ENCODE measurements at regions of chr18 and their contacts with region 1.

Region 1: GRCh38 chr18:62522504-62523254 is at the start of gene ZCCHC2:
- DNase-seq: peak; percentile 99
- ATAC-seq: peak; percentile 82
- H3K4me3 Mint-ChIP-seq: peak within 1 kb of the TSS; percentile 95
- H3K27ac Mint-ChIP-seq: peak within 1 kb of the TSS; percentile 94
- H3K4me1 Mint-ChIP-seq: peaks cover 19% of the 10 kb centered on the region
- H3K27me3 Mint-ChIP-seq: no peaks in the 10 kb centered on the region
- total RNA-seq, gene ZCCHC2: 26.1 to 40.1 TPM

Region 2: DNA sequence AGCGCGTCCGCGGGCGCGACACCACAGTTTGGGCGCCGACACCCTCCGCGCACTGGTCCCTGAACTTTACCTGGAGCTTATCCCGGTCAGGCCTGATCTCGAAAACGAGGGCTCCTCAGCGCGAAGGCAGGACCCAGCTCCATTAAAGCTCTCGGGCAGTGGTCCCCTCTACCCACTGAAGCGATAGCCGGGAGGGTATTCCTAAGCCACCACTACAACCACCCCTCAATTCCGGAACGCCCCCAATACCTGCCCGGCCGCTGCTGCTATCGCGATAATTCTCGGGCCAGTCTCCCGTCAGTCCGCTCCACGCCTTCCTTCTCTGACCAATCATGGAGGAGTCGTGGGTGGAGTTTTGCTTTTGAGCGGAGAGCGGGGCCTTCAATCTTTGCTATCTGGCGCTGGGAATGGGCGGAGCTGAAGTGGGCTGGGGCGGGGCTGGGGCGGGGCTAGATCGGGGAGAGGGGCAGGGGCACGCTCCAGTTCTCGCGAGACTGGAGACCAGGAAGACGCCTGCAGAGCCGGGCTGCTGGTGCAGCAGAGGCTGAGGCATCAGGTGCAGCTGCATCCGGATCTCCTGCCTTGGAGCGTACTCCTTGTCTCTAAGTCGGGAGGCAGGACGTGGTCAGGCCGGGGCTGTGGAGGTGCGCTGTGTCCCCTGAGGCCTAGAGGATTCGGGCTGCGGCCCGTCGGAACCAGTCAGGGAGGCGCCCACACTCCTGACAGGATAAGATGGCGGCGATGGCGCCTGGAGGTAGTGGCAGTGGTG is 335.7 kb before region 1 on chr18 and contains the starts of genes PIGN and RELCH:
- CTCF ChIA-PET with region 1: interaction called, 3 read pairs
- POLR2A ChIA-PET with region 1: interaction called, 3 read pairs
- intact Hi-C with region 1: loop called (anchors 1 kb)
- DNase-seq: peak; percentile 97
- ATAC-seq: peak; percentile 94
- H3K4me3 Mint-ChIP-seq: peak within 1 kb of the TSS; percentile 98
- H3K27ac Mint-ChIP-seq: peak within 1 kb of the TSS; percentile 96
- H3K4me1 Mint-ChIP-seq: peaks cover 43% of the 10 kb centered on the region
- H3K27me3 Mint-ChIP-seq: no peaks in the 10 kb centered on the region
- total RNA-seq, gene PIGN: 29.0 to 29.4 TPM
- total RNA-seq, gene RELCH: 20.5 to 20.7 TPM

Region 3: GRCh38 chr18:62384610-62385099 is 138.0 kb before region 1 on chr18:
- CTCF ChIA-PET with region 1: no interaction called
- POLR2A ChIA-PET with region 1: no interaction called
- intact Hi-C with region 1: no loop called
- DNase-seq: no peak
- ATAC-seq: no peak
- H3K4me3 Mint-ChIP-seq: no peak overlapping the region
- H3K27ac Mint-ChIP-seq: no peak overlapping the region
- H3K4me1 Mint-ChIP-seq: no peaks in the 10 kb centered on the region
- H3K27me3 Mint-ChIP-seq: no peaks in the 10 kb centered on the region

Region 4: GRCh38 chr18:62445386-62445917 is 77.2 kb before region 1 on chr18:
- CTCF ChIA-PET with region 1: no interaction called
- POLR2A ChIA-PET with region 1: no interaction called
- intact Hi-C with region 1: loop called in 1 of 2 experiments (anchors 5 kb)
- DNase-seq: peak; percentile 30
- ATAC-seq: peak; percentile 91
- H3K4me3 Mint-ChIP-seq: no peak overlapping the region
- H3K27ac Mint-ChIP-seq: no peak overlapping the region
- H3K4me1 Mint-ChIP-seq: peaks cover 5% of the 10 kb centered on the region
- H3K27me3 Mint-ChIP-seq: peaks cover 2% of the 10 kb centered on the region

Region 5: DNA sequence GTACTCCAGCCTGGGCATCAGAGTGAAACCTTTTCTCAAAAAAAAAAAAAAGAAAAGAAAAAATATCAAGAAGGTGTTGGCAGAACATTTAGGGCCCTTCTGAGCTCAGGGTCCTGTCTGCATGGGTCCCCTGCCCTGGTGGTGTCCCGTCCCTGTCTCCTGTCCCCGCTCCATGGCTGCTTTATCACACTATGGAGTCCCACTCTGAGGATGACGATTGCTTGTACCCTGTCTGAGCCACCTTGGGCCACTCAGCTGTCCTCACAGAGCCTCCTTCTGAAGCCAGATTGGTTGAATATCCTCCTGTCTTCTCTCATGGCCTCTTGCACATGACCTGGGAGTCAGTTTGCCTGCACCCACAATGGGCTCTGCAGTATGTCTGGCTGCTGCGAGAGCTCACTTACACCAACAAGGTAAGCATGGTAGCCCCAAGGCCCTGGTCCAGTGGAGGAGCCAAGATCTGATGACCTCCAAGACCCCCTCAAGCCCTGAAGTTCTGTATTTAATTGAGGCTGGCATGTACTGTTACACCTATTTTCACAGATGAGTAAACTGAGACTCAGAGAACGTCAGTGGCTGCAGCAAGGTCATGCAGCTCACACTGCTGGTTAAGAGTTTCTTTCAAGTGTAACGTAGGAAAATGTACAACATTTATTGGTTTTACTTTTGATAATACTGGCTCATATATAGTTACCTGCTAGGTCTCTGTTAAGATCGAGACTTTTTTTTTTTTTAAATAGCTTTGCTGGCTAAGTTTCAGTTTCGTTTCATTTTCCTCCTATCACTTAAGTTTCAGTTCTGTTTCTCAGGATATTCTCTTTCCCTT is 16.8 kb before region 1 on chr18:
- CTCF ChIA-PET with region 1: interaction called, 12 read pairs
- POLR2A ChIA-PET with region 1: interaction called, 4 read pairs
- intact Hi-C with region 1: loop called (anchors 1 kb)
- DNase-seq: peak; percentile 66
- ATAC-seq: peak; percentile 99
- H3K4me3 Mint-ChIP-seq: peak overlapping the region; percentile 60
- H3K27ac Mint-ChIP-seq: peak overlapping the region; percentile 98
- H3K4me1 Mint-ChIP-seq: peaks cover 26% of the 10 kb centered on the region
- H3K27me3 Mint-ChIP-seq: no peaks in the 10 kb centered on the region

Region 6: DNA sequence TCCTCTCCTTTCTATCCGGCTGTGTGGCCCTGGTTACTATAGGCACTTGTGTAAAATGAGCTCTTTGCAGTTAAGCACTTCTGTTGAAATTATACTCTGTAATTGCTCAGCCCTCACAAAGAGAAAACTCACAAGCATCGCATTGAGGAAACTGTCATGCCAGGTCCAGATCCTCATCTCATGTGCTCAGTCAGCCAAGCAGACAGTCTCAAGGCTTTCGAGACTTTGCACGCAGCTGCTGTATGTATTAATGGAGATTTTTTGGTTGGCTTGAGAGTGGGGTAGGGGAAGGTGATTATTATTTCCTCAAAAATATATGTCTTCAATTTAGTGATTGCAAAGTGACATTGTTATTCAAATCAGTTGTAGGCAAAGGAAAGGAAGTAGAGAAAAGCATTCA is 159.7 kb after region 1 on chr18:
- CTCF ChIA-PET with region 1: no interaction called
- POLR2A ChIA-PET with region 1: no interaction called
- intact Hi-C with region 1: no loop called
- DNase-seq: no peak
- ATAC-seq: no peak
- H3K4me3 Mint-ChIP-seq: no peak overlapping the region
- H3K27ac Mint-ChIP-seq: no peak overlapping the region
- H3K4me1 Mint-ChIP-seq: no peaks in the 10 kb centered on the region
- H3K27me3 Mint-ChIP-seq: peaks cover 2% of the 10 kb centered on the region

Region 7: DNA sequence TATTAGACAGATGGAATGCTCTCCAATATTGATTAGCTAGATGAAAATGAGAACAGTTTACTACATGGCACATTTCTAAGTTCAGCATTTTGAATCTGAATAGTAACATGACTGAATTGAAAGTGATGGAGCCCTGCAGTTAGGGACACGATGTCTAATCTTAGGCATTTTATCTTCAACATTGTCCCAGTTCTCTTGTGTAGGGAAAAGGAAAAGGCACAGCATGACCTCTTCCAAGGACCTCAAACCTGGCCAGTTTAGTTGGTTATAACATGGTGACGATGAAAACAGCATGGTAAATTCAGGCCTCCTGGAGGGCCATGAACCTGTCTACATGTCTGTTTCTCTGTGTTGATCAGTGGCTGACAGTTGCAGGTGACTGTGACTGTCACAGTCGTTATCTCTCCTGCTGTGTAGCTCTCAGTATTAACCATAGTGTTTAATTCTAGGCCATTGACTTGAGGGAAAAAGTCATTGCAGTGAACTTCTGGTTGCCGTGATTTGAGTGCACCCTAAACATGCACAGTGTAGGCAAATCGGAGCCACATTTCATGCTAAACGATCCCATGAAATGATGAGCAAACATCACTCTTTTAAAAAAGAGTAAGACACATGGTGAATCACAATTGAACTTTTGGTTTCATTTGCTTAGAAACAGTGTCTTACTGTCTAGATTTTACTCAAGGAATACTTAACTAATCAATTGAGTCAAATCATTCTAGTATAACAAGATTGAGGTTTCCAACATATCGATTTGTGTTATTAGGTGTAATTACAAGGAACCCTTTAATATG is 322.4 kb after region 1 on chr18:
- CTCF ChIA-PET with region 1: no interaction called
- POLR2A ChIA-PET with region 1: no interaction called
- intact Hi-C with region 1: loop called in 1 of 2 experiments (anchors 10 kb)
- DNase-seq: peak; percentile 63
- ATAC-seq: peak; percentile 90
- H3K4me3 Mint-ChIP-seq: peak overlapping the region; percentile 15
- H3K27ac Mint-ChIP-seq: peak overlapping the region; percentile 91
- H3K4me1 Mint-ChIP-seq: peaks cover 40% of the 10 kb centered on the region
- H3K27me3 Mint-ChIP-seq: no peaks in the 10 kb centered on the region

Region 8: DNA sequence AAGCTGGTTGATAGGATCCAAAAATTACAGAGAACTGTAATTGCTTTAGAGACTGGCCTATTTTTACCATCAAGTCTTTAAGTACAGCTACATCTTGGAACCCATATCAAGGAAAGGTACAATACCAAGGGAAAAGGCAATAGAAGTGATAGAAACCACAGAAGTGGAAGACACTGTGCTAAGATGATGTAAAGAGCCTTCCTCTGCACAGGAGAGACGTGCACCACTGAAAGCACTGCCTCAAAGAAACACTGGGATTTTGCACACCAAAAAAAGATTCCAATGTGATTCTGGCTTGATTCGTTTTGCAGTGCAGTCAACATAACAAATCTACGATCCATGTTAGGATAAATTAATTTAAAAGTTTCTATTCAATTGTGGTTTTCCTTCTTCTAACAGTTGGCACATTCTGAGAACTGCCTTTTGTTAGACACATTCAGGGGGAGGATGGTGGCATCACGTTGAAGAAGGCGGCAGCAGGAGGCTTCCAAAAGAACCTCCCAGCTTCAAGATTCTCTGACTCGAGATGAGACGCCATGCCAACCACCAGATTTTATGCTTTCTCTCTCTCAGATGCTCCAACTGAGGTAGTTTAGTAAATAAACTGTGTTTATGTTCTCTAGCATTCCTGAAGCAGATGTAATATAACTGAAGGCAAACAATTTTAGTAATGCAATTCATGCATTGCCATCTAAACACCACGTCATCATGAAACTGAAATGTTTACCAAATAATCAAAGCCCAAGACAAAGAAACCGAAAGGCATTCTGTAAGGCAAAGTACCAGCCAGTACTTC is 694.0 kb after region 1 on chr18:
- CTCF ChIA-PET with region 1: no interaction called
- POLR2A ChIA-PET with region 1: no interaction called
- intact Hi-C with region 1: loop called in 1 of 2 experiments (anchors 5 kb)
- DNase-seq: peak; percentile 56
- ATAC-seq: peak; percentile 28
- H3K4me3 Mint-ChIP-seq: peak overlapping the region; percentile 34
- H3K27ac Mint-ChIP-seq: peak overlapping the region; percentile 91
- H3K4me1 Mint-ChIP-seq: peaks cover 95% of the 10 kb centered on the region
- H3K27me3 Mint-ChIP-seq: no peaks in the 10 kb centered on the region

Region 9: GRCh38 chr18:63422087-63422809 is 899.6 kb after region 1 on chr18 and contains the start of gene VPS4B:
- CTCF ChIA-PET with region 1: no interaction called
- POLR2A ChIA-PET with region 1: no interaction called
- intact Hi-C with region 1: loop called (anchors 1 to 5 kb)
- DNase-seq: peak; percentile 100
- ATAC-seq: peak; percentile 95
- H3K4me3 Mint-ChIP-seq: peak within 1 kb of the TSS; percentile 99
- H3K27ac Mint-ChIP-seq: peak within 1 kb of the TSS; percentile 95
- H3K4me1 Mint-ChIP-seq: peaks cover 30% of the 10 kb centered on the region
- H3K27me3 Mint-ChIP-seq: no peaks in the 10 kb centered on the region
- total RNA-seq, gene VPS4B: 40.7 to 48.4 TPM

Region 10: GRCh38 chr18:63753676-63754075 is 1231.0 kb after region 1 on chr18:
- CTCF ChIA-PET with region 1: no interaction called
- POLR2A ChIA-PET with region 1: no interaction called
- intact Hi-C with region 1: no loop called
- DNase-seq: no peak
- ATAC-seq: no peak
- H3K4me3 Mint-ChIP-seq: no peak overlapping the region
- H3K27ac Mint-ChIP-seq: no peak overlapping the region
- H3K4me1 Mint-ChIP-seq: no peaks in the 10 kb centered on the region
- H3K27me3 Mint-ChIP-seq: no peaks in the 10 kb centered on the region

Region 11: DNA sequence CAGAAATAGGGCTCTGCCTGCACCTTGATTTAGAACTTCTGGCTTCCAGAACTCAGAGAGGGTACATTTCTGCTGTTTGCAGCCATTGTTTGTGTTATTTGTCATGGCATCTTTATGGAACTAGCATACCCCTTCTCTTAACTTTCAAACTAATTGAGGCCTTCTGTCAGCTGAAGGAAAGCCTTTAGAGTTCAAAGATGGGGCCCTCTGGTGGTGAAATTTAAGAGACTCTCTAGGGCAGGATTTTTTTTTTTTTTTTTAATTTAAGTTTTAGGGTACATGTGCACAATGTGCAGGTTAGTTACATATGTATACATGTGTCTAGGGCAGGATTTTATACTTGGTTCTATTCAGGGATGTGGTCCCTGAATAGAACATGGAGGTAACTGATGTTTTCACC is 1886.8 kb after region 1 on chr18:
- CTCF ChIA-PET with region 1: no interaction called
- POLR2A ChIA-PET with region 1: no interaction called
- intact Hi-C with region 1: no loop called
- DNase-seq: no peak
- ATAC-seq: no peak
- H3K4me3 Mint-ChIP-seq: no peak overlapping the region
- H3K27ac Mint-ChIP-seq: no peak overlapping the region
- H3K4me1 Mint-ChIP-seq: no peaks in the 10 kb centered on the region
- H3K27me3 Mint-ChIP-seq: no peaks in the 10 kb centered on the region

Measured in activated CD4-positive, alpha-beta T cell treated with anti-CD3 and anti-CD28 coated beads for 36 hours (primary cell).